Heart left ventricle (tissue), 16 donors: ENCODE measurements at regions of chr10 and their contacts with region 1.

Region 1: DNA sequence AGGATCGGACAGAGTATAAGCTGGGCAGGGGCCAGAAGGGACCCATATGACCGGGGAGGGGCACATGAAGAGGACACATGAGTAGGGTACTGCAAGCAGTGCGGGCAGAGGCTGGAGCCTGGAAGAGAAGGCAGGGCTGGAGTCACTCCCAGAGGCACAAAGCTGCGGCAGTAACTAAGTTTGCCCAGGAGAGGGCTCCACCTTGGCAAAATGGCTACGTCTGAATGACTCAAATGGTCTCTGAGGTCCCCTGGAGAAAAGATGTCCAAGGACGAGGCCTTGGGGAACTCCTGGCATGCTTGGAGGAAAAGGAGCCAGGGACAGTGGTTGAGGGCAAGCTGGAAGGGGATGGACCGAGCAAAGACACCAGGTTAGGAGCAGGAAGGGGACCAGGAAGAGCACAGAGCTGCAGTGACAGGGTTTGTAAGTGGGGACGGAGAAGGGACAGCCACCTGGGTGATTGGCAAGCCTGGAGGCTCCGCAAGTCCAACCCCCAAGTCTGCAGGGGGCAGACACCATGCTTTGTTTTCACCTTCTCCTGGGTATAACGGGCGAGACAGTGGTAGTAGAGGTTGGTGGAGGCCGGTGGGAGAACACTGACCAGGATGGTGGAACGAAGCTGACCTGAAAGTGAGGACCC is 43.1 kb upstream of the LBX1 start:
- DNase-seq: peak in 4 of 5 donors; percentile 29 to 50 (median 48)
- ATAC-seq: peak; percentile 64 to 87 (median 80)
- H3K4me3 ChIP-seq: no peak overlapping the region
- H3K27ac ChIP-seq: no peak overlapping the region
- H3K4me1 ChIP-seq: no peaks in the 10 kb centered on the region
- H3K27me3 ChIP-seq: peaks cover 0 to 25% (median 4%) of the 10 kb centered on the region in 9 donors
- CTCF ChIP-seq: peak; percentile 61 to 78 (median 72)
- POLR2A ChIP-seq: no peak

Region 2: DNA sequence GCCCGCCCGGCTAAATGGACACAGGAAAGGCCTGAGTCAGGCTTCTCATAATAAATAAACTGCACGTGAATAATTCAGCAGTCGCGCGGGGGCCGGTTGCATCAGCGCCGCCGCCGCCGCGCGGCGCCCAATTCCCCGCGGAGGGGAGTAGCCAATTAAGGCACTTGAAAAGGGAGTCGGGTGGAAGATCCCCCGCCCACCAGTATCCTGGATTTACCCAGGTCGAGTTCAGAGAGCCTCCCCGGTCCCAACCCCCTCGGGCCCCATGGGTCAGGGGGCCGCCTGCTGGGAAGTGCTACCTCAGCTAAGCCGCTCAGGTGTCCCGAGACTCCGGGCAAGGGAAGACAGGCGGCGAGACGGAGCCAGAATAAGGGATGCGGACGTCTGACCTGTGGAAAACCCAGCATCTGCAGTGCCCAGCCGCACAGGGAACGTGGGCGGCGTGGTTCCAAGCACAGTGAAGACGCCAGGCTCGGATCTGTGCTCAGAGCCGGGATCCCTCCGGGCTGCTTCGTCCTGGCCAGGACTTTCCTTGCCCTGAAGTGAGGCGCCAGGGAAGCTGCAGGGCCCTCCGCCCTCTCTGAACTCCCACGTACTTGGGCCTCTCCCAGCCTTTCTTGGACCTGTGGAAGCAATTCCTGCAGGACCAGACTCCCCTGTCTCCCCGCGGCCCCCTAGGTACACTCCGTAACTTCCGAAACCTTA is 35.8 kb before region 1 on chr10:
- intact Hi-C with region 1: loop called in 1 of 10 experiments (anchors 1 kb)
- DNase-seq: no peak
- ATAC-seq: no peak
- H3K4me3 ChIP-seq: peak overlapping the region in 1 of 12 donors; percentile 5
- H3K27ac ChIP-seq: no peak overlapping the region
- H3K4me1 ChIP-seq: peaks cover 0 to 15% (median 6%) of the 10 kb centered on the region in 12 donors
- H3K27me3 ChIP-seq: peaks cover 57 to 100% (median 91%) of the 10 kb centered on the region in 9 donors
- CTCF ChIP-seq: no peak
- POLR2A ChIP-seq: no peak